ENCODE measurements at regions of chr12 and their contacts with region 1.

Region 1: GRCh38 chr12:2812290-2813213 is at the start of gene ITFG2:
- H3K4me3 Mint-ChIP-seq: peak within 1 kb of the TSS; percentile 100
- H3K27ac Mint-ChIP-seq: peak within 1 kb of the TSS; percentile 99
- H3K4me1 Mint-ChIP-seq: peaks cover 17% of the 10 kb centered on the region
- H3K27me3 Mint-ChIP-seq: no peaks in the 10 kb centered on the region

Region 2: DNA sequence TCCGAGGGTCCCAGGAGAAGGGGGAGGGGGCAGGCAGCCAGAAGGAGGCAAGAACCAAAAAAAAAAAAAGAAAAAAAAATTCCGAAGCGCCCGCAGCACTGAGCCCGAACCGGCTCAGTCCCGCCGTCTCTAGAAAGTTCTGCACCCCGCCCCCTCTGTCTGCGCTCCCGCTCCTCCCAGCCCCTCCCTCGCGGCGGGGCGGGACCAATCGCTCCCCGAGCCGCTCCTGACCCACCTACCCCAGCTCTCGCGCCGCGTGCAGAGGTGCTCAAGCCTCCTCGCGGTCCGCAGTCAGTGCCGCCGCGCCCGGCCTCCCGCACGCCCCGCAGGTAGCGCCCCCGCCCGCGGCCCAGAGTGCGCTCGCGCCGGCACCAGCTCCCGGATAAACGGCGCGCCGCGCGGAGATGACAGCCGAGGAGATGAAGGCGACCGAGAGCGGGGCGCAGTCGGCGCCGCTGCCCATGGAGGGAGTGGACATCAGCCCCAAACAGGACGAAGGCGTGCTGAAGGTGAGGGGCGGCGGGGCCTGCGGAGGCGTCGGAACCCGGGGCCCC is 17.7 kb before region 1 on chr12 and contains the start of gene FKBP4:
- intact Hi-C with region 1: loop called (anchors 1 kb)
- H3K4me3 Mint-ChIP-seq: peak within 1 kb of the TSS; percentile 100
- H3K27ac Mint-ChIP-seq: peak within 1 kb of the TSS; percentile 89
- H3K4me1 Mint-ChIP-seq: peaks cover 48% of the 10 kb centered on the region
- H3K27me3 Mint-ChIP-seq: peaks cover 13% of the 10 kb centered on the region

Region 3: DNA sequence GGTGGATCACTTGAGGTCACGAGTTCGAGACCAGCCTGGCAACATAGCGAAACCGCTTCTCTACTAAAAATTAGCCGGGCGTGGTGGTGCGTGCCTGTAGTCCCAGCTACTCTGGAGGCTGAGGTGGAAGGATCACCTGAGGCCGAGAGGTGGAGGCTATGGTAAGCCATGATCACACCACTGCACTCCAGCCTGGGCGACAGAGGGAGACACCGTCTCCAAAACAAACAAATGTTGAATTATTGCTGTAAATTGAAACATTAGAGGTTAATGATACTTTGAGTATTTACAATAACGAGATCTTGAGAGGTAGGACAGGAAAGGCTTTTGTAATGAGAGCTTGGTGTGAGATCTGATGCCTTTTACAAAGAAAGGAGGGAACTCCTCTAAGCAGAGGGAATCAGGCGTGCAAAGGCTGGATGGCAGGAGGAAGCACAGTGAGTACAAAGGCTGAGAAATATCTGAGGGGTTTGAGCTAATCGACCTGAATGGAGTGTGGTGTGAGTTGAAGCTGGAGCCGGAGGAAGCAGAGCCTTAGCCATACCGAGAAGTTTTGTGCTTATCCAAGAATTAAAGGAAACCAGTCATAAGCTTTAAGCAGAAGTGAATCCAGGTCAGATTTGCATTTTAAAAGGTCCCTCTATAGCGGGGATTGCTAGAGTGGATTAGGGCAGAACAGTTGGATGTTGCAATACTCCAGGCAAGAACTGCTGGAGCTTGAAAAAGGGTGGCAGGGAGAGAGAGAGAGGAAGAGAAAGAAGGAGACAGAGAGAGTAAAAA is 65.6 kb after region 1 on chr12:
- intact Hi-C with region 1: loop called (anchors 2 kb)
- H3K4me3 Mint-ChIP-seq: peak overlapping the region; percentile 85
- H3K27ac Mint-ChIP-seq: peak overlapping the region; percentile 92
- H3K4me1 Mint-ChIP-seq: peaks cover 44% of the 10 kb centered on the region
- H3K27me3 Mint-ChIP-seq: no peaks in the 10 kb centered on the region

Measured in dendritic cell treated with granulocyte-macrophage colony-stimulating factor and Interleukin-4, amounts not matched to agents 40 ng/mL and 50 ng/mL, for 4 days (primary cell).